ENCODE measurements at regions of chr6 and their contacts with region 1.

Region 1: GRCh38 chr6:4155848-4156466 is 20.6 kb upstream of the ECI2 start:
- DNase-seq: peak; percentile 88
- ATAC-seq: peak; percentile 99
- H3K4me3 Mint-ChIP-seq: no peak overlapping the region
- H3K27ac Mint-ChIP-seq: no peak overlapping the region
- H3K4me1 Mint-ChIP-seq: peaks cover 6% of the 10 kb centered on the region
- H3K27me3 Mint-ChIP-seq: peaks cover 17% of the 10 kb centered on the region

Region 2: GRCh38 chr6:3742426-3743344 is 413.3 kb before region 1 on chr6:
- CTCF ChIA-PET with region 1: interaction called, 11 read pairs
- POLR2A ChIA-PET with region 1: no interaction called
- DNase-seq: peak; percentile 90
- ATAC-seq: peak; percentile 93
- H3K4me3 Mint-ChIP-seq: no peak overlapping the region
- H3K27ac Mint-ChIP-seq: peak overlapping the region; percentile 57
- H3K4me1 Mint-ChIP-seq: peaks cover 13% of the 10 kb centered on the region
- H3K27me3 Mint-ChIP-seq: peaks cover 8% of the 10 kb centered on the region

Region 3: DNA sequence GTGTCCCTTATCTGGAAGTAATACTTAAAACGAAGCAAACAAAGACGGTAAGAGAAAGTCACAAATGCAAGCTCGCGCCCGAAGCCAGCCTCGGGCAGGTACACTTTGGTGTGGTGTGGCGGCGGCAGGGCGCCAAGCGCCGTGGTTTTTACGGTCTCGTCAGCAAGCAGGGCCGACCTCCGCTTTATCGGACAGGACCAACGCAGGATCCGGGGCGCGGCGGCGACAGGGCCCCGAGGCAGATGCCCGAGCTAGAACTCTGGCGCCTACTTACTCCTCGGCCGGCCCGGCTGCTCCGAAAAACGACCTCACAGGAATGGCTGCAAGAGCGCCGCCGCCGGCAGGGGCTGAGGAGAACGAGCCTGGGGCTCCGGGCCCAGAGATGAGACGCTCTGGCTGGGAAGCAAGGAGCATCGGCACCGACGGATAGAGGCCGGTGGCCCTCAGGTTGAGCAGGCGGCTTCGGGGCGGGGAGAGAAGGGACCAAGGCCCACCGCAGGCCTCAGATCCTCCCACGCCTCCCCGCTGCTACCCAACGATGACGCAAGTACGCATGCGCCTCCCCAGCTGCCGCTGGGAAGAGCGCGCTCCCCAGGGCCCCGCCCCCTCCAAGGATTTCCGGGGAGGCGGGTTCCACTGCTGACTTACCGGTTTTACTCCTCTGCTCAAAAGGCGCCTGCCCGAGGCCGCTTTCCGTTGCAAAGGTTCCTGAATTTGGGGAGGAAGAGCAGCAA is 137.6 kb before region 1 on chr6:
- CTCF ChIA-PET with region 1: interaction called, 11 read pairs
- POLR2A ChIA-PET with region 1: interaction called, 4 read pairs
- DNase-seq: peak; percentile 96
- ATAC-seq: peak; percentile 66
- H3K4me3 Mint-ChIP-seq: peak overlapping the region; percentile 92
- H3K27ac Mint-ChIP-seq: peak overlapping the region; percentile 98
- H3K4me1 Mint-ChIP-seq: peaks cover 58% of the 10 kb centered on the region
- H3K27me3 Mint-ChIP-seq: no peaks in the 10 kb centered on the region

Region 4: GRCh38 chr6:4055420-4056041 is 100.4 kb before region 1 on chr6:
- CTCF ChIA-PET with region 1: interaction called, 95 read pairs
- POLR2A ChIA-PET with region 1: interaction called, 3 read pairs
- DNase-seq: peak; percentile 30
- ATAC-seq: no peak
- H3K4me3 Mint-ChIP-seq: no peak overlapping the region
- H3K27ac Mint-ChIP-seq: peak overlapping the region; percentile 30
- H3K4me1 Mint-ChIP-seq: peaks cover 35% of the 10 kb centered on the region
- H3K27me3 Mint-ChIP-seq: no peaks in the 10 kb centered on the region

Region 5: GRCh38 chr6:4135665-4136353 is 20.1 kb before region 1 on chr6:
- CTCF ChIA-PET with region 1: interaction called, 38 read pairs
- POLR2A ChIA-PET with region 1: no interaction called
- DNase-seq: peak; percentile 96
- ATAC-seq: peak; percentile 90
- H3K4me3 Mint-ChIP-seq: peak overlapping the region; percentile 83
- H3K27ac Mint-ChIP-seq: peak overlapping the region; percentile 80
- H3K4me1 Mint-ChIP-seq: peaks cover 28% of the 10 kb centered on the region
- H3K27me3 Mint-ChIP-seq: peaks cover 1% of the 10 kb centered on the region

Region 6: GRCh38 chr6:4145083-4145482 is 10.9 kb before region 1 on chr6:
- CTCF ChIA-PET with region 1: interaction called, 12 read pairs
- POLR2A ChIA-PET with region 1: no interaction called
- DNase-seq: no peak
- ATAC-seq: no peak
- H3K4me3 Mint-ChIP-seq: no peak overlapping the region
- H3K27ac Mint-ChIP-seq: no peak overlapping the region
- H3K4me1 Mint-ChIP-seq: no peaks in the 10 kb centered on the region
- H3K27me3 Mint-ChIP-seq: peaks cover 16% of the 10 kb centered on the region